Colonic mucosa (tissue), 4 donors: ENCODE measurements at regions of chr11 and their contacts with region 1.

Region 1: GRCh38 chr11:87037450-87038234 is at the start of gene TMEM135:
- DNase-seq: peak; percentile 98
- H3K4me3 ChIP-seq: peak within 1 kb of the TSS; percentile 62
- H3K27ac ChIP-seq: peak within 1 kb of the TSS; percentile 92
- H3K4me1 ChIP-seq: peaks cover 13% of the 10 kb centered on the region
- H3K27me3 ChIP-seq: no peaks in the 10 kb centered on the region
- CTCF ChIP-seq: no peak
- total RNA-seq, gene TMEM135: 28.8 to 41.4 TPM

Region 2: GRCh38 chr11:86955361-86956120 is 82.1 kb before region 1 on chr11 and contains the start of gene FZD4:
- intact Hi-C with region 1: loop called (anchors 10 kb)
- DNase-seq: peak; percentile 87
- H3K4me3 ChIP-seq: peak within 1 kb of the TSS; percentile 84
- H3K27ac ChIP-seq: peak within 1 kb of the TSS; percentile 95
- H3K4me1 ChIP-seq: no peaks in the 10 kb centered on the region
- H3K27me3 ChIP-seq: no peaks in the 10 kb centered on the region
- CTCF ChIP-seq: no peak
- total RNA-seq, gene FZD4: 4.3 to 6.7 TPM